MCF 10A (cell line): ENCODE measurements at regions of chr1 and their contacts with region 1.

Region 1: GRCh38 chr1:64469977-64470664 is at the start of gene CACHD1:
- DNase-seq: peak; percentile 76
- H3K4me3 Mint-ChIP-seq: peak within 1 kb of the TSS; percentile 83
- H3K27ac Mint-ChIP-seq: peak within 1 kb of the TSS; percentile 37
- H3K4me1 Mint-ChIP-seq: peaks cover 28% of the 10 kb centered on the region
- H3K27me3 Mint-ChIP-seq: peaks cover 8% of the 10 kb centered on the region
- CTCF ChIP-seq: peak; percentile 24
- total RNA-seq, gene CACHD1: 2.9 and 3.9 TPM in 2 replicates

Region 2: GRCh38 chr1:64363111-64363510 is 107.0 kb before region 1 on chr1:
- CTCF ChIA-PET with region 1: no interaction called
- POLR2A ChIA-PET with region 1: no interaction called
- intact Hi-C with region 1: no loop called
- DNase-seq: no peak
- H3K4me3 Mint-ChIP-seq: no peak overlapping the region
- H3K27ac Mint-ChIP-seq: no peak overlapping the region
- H3K4me1 Mint-ChIP-seq: no peaks in the 10 kb centered on the region
- H3K27me3 Mint-ChIP-seq: no peaks in the 10 kb centered on the region
- CTCF ChIP-seq: no peak

Region 3: GRCh38 chr1:64505232-64505943 is 35.3 kb after region 1 on chr1:
- CTCF ChIA-PET with region 1: interaction called, 3 read pairs
- POLR2A ChIA-PET with region 1: interaction called, 4 read pairs
- intact Hi-C with region 1: loop called (anchors 5 kb)
- DNase-seq: no peak
- H3K4me3 Mint-ChIP-seq: peak overlapping the region; percentile 72
- H3K27ac Mint-ChIP-seq: no peak overlapping the region
- H3K4me1 Mint-ChIP-seq: peaks cover 11% of the 10 kb centered on the region
- H3K27me3 Mint-ChIP-seq: no peaks in the 10 kb centered on the region
- CTCF ChIP-seq: no peak

Region 4: DNA sequence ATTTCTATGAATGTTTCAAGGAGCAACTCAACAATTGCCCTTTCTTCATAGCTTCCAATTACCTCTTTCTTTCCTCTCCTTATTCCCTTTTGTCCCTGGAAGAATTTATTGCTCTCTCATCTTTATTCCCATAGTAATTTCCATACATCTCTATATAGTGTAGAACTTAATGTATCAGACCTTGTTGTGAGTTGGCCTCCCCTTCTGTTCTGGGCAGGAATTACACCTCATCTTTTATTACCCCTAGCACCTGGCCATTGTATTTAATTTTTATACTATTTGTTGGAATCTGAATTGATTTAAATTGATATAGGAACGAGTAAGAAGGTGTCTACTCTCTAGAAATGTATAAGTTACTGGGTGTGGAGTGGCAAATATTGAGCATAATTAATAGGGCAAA is 114.4 kb after region 1 on chr1:
- CTCF ChIA-PET with region 1: interaction called, 3 read pairs
- POLR2A ChIA-PET with region 1: no interaction called
- intact Hi-C with region 1: loop called (anchors 1 kb)
- DNase-seq: peak; percentile 25
- H3K4me3 Mint-ChIP-seq: no peak overlapping the region
- H3K27ac Mint-ChIP-seq: no peak overlapping the region
- H3K4me1 Mint-ChIP-seq: no peaks in the 10 kb centered on the region
- H3K27me3 Mint-ChIP-seq: no peaks in the 10 kb centered on the region
- CTCF ChIP-seq: peak; percentile 31

Region 5: DNA sequence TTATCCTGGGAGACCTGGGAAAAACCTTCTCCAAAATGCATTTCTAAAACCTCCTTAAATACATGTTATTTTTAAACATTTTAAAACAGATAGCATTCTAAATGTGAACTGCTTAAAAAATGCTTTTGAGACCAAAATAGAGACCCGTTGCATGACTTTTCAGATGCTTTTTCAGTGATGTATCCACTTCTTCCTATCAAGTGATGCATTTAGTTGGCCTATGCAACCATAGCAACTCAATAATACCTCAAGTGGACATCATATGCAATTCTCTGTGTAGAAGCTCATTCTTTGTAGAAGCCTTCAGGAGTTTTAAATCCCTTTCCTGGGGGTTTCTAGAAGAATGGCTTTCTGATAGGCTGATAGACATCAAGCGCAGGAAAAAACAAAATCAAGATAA is 180.3 kb after region 1 on chr1:
- CTCF ChIA-PET with region 1: no interaction called
- POLR2A ChIA-PET with region 1: no interaction called
- intact Hi-C with region 1: no loop called
- DNase-seq: no peak
- H3K4me3 Mint-ChIP-seq: no peak overlapping the region
- H3K27ac Mint-ChIP-seq: no peak overlapping the region
- H3K4me1 Mint-ChIP-seq: no peaks in the 10 kb centered on the region
- H3K27me3 Mint-ChIP-seq: no peaks in the 10 kb centered on the region
- CTCF ChIP-seq: no peak